Body of pancreas (tissue), 4 donors: ENCODE measurements at regions of chr15 and their contacts with region 1.

Region 1: GRCh38 chr15:68304589-68305337 is 27.2 kb downstream of the FEM1B start:
- DNase-seq: peak in 1 of 4 donors; percentile 1
- ATAC-seq: no peak
- H3K4me3 ChIP-seq: no peak overlapping the region
- H3K27ac ChIP-seq: no peak overlapping the region
- H3K4me1 ChIP-seq: no peaks in the 10 kb centered on the region
- H3K27me3 ChIP-seq: no peaks in the 10 kb centered on the region
- CTCF ChIP-seq: no peak
- POLR2A ChIP-seq: no peak

Region 2: GRCh38 chr15:68383161-68384074 is 78.7 kb after region 1 on chr15:
- intact Hi-C with region 1: loop called (anchors 5 kb)
- DNase-seq: peak; percentile 28 to 57 (median 31)
- ATAC-seq: no peak
- H3K4me3 ChIP-seq: no peak overlapping the region
- H3K27ac ChIP-seq: no peak overlapping the region
- H3K4me1 ChIP-seq: no peaks in the 10 kb centered on the region
- H3K27me3 ChIP-seq: no peaks in the 10 kb centered on the region
- CTCF ChIP-seq: peak; percentile 15 to 70 (median 64)
- POLR2A ChIP-seq: no peak

Region 3: GRCh38 chr15:68450192-68450591 is 145.4 kb after region 1 on chr15:
- intact Hi-C with region 1: no loop called
- DNase-seq: no peak
- ATAC-seq: no peak
- H3K4me3 ChIP-seq: no peak overlapping the region
- H3K27ac ChIP-seq: no peak overlapping the region
- H3K4me1 ChIP-seq: no peaks in the 10 kb centered on the region
- H3K27me3 ChIP-seq: no peaks in the 10 kb centered on the region
- CTCF ChIP-seq: no peak
- POLR2A ChIP-seq: no peak

Region 4: GRCh38 chr15:68559345-68560310 is 254.9 kb after region 1 on chr15:
- intact Hi-C with region 1: loop called (anchors 10 kb)
- DNase-seq: peak; percentile 70 to 77 (median 70)
- ATAC-seq: peak; percentile 85
- H3K4me3 ChIP-seq: no peak overlapping the region
- H3K27ac ChIP-seq: no peak overlapping the region
- H3K4me1 ChIP-seq: peaks cover 12% of the 10 kb centered on the region
- H3K27me3 ChIP-seq: peaks cover 0 to 4% of the 10 kb centered on the region in 2 donors
- CTCF ChIP-seq: peak; percentile 83 to 97 (median 91)
- POLR2A ChIP-seq: no peak